Activated CD4-positive, alpha-beta T cell treated with anti-CD3 and anti-CD28 coated beads for 36 hours (primary cell): ENCODE measurements at regions of chr6 and their contacts with region 1.

Region 1: DNA sequence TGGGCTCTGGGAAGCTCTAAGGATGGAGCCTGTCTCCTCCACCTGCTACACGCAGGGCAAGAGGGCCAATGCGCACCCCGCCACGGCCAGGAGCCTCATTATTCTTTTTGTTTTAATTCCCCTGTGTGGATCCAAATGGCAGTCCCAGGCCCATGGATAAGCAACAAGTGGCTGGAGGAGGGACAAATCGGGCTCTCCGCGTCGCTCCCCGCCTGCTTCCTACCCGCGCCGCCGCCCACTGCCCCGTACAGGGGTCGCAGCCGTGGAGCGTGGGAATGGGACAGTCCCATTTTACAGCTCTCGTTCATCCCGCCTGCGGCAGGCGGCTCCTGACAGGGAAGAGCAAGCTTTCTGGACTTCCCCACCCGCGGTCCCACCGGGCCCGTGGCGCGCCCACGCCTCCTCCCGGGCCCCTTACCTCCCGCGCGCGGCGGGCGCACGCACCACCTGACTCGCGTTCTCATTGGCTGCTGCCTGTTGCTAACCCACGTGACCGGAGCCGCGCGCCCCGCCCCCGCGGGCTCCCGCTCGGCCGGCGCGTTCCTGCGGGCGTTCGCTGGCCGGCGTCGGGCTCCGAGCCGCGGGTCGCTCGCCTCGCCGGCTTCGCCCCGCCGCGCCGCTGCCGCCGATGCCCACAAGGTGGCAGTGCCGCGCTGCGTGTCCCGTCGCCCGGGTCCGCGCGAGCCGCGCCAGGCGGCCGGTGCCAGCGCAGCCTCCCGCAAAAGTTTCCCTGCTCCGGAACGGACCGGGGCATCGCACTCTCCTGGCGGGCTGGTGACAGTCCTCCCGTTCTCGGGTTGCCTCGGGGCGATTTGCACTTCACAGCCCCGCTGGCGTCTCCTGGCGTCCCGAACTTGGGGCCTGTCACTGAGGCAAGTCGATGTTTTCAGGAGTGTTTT is 93.3 kb downstream of the CD83 start:
- DNase-seq: peak; percentile 94
- ATAC-seq: peak; percentile 89
- H3K4me3 Mint-ChIP-seq: peak overlapping the region; percentile 75
- H3K27ac Mint-ChIP-seq: peak overlapping the region; percentile 86
- H3K4me1 Mint-ChIP-seq: peaks cover 35% of the 10 kb centered on the region
- H3K27me3 Mint-ChIP-seq: no peaks in the 10 kb centered on the region

Region 2: GRCh38 chr6:14381829-14382677 is 171.1 kb after region 1 on chr6:
- CTCF ChIA-PET with region 1: no interaction called
- POLR2A ChIA-PET with region 1: no interaction called
- intact Hi-C with region 1: loop called in 1 of 2 experiments (anchors 5 kb)
- DNase-seq: peak; percentile 8
- ATAC-seq: peak; percentile 80
- H3K4me3 Mint-ChIP-seq: no peak overlapping the region
- H3K27ac Mint-ChIP-seq: no peak overlapping the region
- H3K4me1 Mint-ChIP-seq: peaks cover 43% of the 10 kb centered on the region
- H3K27me3 Mint-ChIP-seq: no peaks in the 10 kb centered on the region

Region 3: GRCh38 chr6:14542670-14543366 is 331.9 kb after region 1 on chr6:
- CTCF ChIA-PET with region 1: no interaction called
- POLR2A ChIA-PET with region 1: no interaction called
- intact Hi-C with region 1: loop called in 1 of 2 experiments (anchors 1 kb)
- DNase-seq: peak; percentile 90
- ATAC-seq: peak; percentile 99
- H3K4me3 Mint-ChIP-seq: no peak overlapping the region
- H3K27ac Mint-ChIP-seq: peak overlapping the region; percentile 79
- H3K4me1 Mint-ChIP-seq: peaks cover 41% of the 10 kb centered on the region
- H3K27me3 Mint-ChIP-seq: peaks cover 2% of the 10 kb centered on the region

Region 4: DNA sequence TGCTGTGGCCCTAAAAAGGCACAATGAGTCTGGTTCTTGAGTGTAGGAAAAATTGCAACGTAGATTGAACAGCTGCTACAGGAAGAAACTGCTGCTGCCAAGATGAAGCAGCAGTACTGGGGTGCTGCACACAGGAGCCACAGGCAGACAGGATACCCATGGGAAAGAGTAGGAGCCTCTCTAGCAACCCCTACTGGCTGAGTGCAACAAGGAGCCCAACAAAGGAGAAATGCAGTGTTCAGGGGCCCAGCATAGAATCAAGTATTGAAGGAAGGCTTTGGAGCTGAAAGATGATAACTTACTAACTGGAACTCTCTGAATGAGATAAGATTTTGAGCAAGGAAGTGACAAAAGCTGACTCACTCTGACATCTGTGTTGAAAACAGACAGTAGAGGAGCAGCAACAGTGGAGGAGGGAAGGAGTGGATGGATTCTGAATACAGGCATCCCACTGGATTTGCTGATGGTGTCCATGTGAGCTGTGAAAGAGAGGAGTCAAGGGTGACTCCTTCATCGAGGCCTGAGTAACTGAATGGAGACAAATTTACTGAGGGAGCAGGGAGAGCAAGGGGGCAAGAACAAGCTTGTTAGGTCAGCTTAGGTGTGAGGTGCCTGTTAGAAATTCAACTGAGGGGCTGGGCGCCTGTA is 500.3 kb after region 1 on chr6:
- CTCF ChIA-PET with region 1: no interaction called
- POLR2A ChIA-PET with region 1: interaction called, 4 read pairs
- intact Hi-C with region 1: loop called in 1 of 2 experiments (anchors 1 kb)
- DNase-seq: peak; percentile 82
- ATAC-seq: peak; percentile 85
- H3K4me3 Mint-ChIP-seq: peak overlapping the region; percentile 42
- H3K27ac Mint-ChIP-seq: peak overlapping the region; percentile 100
- H3K4me1 Mint-ChIP-seq: peaks cover 57% of the 10 kb centered on the region
- H3K27me3 Mint-ChIP-seq: no peaks in the 10 kb centered on the region

Region 5: DNA sequence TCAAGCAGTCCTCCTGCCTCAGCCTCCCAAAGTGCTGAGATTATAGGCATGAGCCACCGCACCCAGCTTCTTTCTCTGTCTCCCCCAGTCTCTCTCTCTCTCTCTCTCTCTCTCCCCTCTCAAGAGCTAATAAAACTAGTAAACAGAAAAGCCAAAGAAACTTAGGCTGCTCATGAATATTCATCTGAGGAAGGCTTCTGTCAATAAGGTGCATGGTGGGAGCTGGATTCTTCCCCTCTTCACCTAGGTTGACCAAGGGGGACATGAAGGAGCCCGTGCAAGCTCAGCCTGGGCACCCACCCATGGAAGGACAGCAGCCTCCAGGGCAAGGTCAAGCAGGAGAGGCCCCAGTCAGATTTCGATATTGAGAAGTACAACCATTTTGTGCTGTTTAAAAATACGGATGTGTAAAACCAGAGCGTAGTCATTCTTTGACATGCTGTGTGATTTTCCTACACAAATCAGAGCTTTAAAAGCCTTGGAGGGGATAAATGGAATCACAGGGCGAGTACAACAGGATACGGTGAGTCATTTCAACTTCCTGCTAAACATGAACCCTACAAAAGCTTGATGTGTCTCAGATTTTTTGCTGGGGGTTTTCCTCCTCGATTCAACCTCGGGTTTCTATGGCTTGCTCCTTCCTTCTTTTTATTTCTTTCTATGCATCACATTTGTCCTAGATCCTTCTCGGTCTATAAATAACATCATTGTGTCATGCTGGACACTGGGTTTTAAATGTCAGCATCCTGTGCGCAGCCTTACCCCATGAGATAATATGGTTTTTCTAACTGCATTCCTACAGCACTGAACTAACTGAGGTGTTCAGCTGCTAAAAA is 666.1 kb after region 1 on chr6:
- CTCF ChIA-PET with region 1: interaction called, 4 read pairs
- POLR2A ChIA-PET with region 1: no interaction called
- intact Hi-C with region 1: loop called (anchors 1 to 5 kb)
- DNase-seq: peak; percentile 52
- ATAC-seq: peak; percentile 74
- H3K4me3 Mint-ChIP-seq: peak overlapping the region; percentile 47
- H3K27ac Mint-ChIP-seq: peak overlapping the region; percentile 99
- H3K4me1 Mint-ChIP-seq: peaks cover 78% of the 10 kb centered on the region
- H3K27me3 Mint-ChIP-seq: no peaks in the 10 kb centered on the region

Region 6: GRCh38 chr6:15299430-15300131 is 1088.7 kb after region 1 on chr6:
- CTCF ChIA-PET with region 1: no interaction called
- POLR2A ChIA-PET with region 1: no interaction called
- intact Hi-C with region 1: loop called in 1 of 2 experiments (anchors 5 kb)
- DNase-seq: peak; percentile 48
- ATAC-seq: no peak
- H3K4me3 Mint-ChIP-seq: peak overlapping the region; percentile 18
- H3K27ac Mint-ChIP-seq: peak overlapping the region; percentile 69
- H3K4me1 Mint-ChIP-seq: peaks cover 83% of the 10 kb centered on the region
- H3K27me3 Mint-ChIP-seq: no peaks in the 10 kb centered on the region

Region 7: GRCh38 chr6:15491255-15491985 is 1280.5 kb after region 1 on chr6:
- CTCF ChIA-PET with region 1: interaction called, 3 read pairs
- POLR2A ChIA-PET with region 1: no interaction called
- intact Hi-C with region 1: loop called in 1 of 2 experiments (anchors 1 kb)
- DNase-seq: peak; percentile 86
- ATAC-seq: peak; percentile 82
- H3K4me3 Mint-ChIP-seq: no peak overlapping the region
- H3K27ac Mint-ChIP-seq: peak overlapping the region; percentile 82
- H3K4me1 Mint-ChIP-seq: peaks cover 42% of the 10 kb centered on the region
- H3K27me3 Mint-ChIP-seq: no peaks in the 10 kb centered on the region